ENCODE measurements at regions of chr6 and their contacts with region 1.

Region 1: DNA sequence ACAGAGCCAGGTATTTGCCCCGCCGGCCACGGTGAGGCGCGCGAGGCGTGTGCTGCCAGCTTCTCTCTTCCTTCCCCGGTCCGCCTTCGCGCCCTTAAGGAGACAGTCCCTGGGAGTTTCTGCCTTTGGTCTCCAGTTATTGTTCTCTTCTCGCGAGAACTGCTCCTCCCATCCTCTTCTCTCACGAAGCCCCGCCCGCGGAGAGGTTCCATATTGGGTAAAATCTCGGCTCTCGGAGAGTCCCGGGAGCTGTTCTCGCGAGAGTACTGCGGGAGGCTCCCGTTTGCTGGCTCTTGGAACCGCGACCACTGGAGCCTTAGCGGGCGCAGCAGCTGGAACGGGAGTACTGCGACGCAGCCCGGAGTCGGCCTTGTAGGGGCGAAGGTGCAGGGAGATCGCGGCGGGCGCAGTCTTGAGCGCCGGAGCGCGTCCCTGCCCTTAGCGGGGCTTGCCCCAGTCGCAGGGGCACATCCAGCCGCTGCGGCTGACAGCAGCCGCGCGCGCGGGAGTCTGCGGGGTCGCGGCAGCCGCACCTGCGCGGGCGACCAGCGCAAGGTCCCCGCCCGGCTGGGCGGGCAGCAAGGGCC is at the start of gene MAPK14:
- DNase-seq: peak; percentile 94 to 100 (median 98)
- ATAC-seq: peak; percentile 88
- H3K4me3 ChIP-seq: peak within 1 kb of the TSS; percentile 85 to 99
- H3K4me3 Mint-ChIP-seq: peak within 1 kb of the TSS; percentile 90
- H3K27ac ChIP-seq: peak within 1 kb of the TSS; percentile 72 to 73
- H3K27ac Mint-ChIP-seq: peak within 1 kb of the TSS; percentile 95
- H3K4me1 ChIP-seq: peaks cover 14% of the 10 kb centered on the region
- H3K4me1 Mint-ChIP-seq: peaks cover 42% of the 10 kb centered on the region
- H3K27me3 ChIP-seq: peaks cover 0 to 2% of the 10 kb centered on the region in 2 experiments
- H3K27me3 Mint-ChIP-seq: peaks cover 18% of the 10 kb centered on the region
- CTCF ChIP-seq: peak; percentile 87
- total RNA-seq, gene MAPK14: 34.5 to 34.9 TPM

Region 2: DNA sequence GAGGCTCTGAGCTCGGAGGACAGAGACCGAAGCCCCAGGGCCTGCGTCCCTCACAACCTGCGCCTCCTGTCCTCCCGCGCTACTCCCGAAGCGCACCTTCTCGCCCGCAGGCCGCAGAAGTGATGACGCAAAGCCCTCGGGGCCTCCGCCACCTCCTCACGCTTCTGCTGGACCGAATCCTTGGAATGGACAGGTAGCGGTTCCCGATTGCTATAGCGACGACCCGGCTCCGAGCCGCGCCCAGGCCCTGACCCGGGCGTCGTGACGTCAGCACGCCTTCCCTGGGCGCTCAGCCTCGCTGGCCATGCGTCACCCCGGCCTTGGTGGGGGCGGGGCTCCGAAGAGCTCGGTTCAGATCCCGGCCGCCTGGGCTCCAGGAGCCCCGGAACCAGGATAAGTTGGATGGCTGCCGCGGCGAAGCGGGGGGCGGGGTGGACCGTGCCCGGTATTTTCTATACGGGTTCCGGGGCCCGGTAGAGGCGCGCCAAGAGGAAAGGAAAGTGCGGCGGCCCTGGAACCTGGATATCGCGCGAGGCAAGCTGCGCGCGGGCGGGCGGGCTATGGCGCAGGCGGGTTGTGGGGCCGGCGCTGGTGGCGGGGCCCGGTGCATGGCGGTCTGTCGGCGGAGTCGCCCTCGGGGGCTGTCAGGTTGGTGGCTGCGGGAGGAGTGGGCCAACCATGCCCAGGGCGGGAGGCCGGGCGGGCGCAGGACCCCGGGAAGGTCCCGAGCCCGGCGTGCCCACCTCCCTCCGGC is 768.2 kb before region 1 on chr6 and contains the start of gene ZNF76:
- CTCF ChIA-PET with region 1: no interaction called
- POLR2A ChIA-PET with region 1: no interaction called
- intact Hi-C with region 1: loop called in 1 of 2 experiments (anchors 2 kb)
- DNase-seq: peak; percentile 86 to 97 (median 93)
- ATAC-seq: peak; percentile 73
- H3K4me3 ChIP-seq: peak within 1 kb of the TSS; percentile 75 to 95
- H3K4me3 Mint-ChIP-seq: peak within 1 kb of the TSS; percentile 97
- H3K27ac ChIP-seq: peak within 1 kb of the TSS; percentile 88 to 96
- H3K27ac Mint-ChIP-seq: peak within 1 kb of the TSS; percentile 99
- H3K4me1 ChIP-seq: peaks cover 42% of the 10 kb centered on the region
- H3K4me1 Mint-ChIP-seq: peaks cover 55% of the 10 kb centered on the region
- H3K27me3 ChIP-seq: no peaks in the 10 kb centered on the region
- H3K27me3 Mint-ChIP-seq: no peaks in the 10 kb centered on the region
- CTCF ChIP-seq: no peak
- total RNA-seq, gene ZNF76: 54.6 to 57.8 TPM

Region 3: DNA sequence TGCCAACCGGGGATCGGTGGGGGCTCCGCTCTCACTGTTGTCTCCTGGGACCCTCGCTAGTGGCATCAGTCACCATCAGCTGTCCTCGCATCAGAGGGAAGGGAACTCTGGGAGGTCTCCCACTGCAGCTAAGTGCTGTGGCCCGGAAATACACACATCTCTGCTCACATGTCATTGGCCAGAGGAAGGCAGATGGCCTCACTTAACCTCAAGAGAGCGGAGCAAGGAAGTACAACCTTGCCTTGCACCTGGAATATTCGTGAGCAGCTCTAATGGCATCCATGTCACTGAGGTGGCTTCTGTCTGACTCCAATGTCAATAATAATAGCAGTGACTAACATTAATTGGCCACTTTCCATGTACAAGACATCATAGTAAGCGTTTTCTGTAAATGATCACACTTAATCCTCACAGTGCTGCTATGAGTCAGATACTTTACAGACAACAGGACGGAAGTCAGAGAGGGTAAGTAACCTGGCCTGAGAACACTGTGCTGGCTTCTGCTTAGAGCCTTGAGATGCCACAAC is 216.6 kb before region 1 on chr6:
- CTCF ChIA-PET with region 1: no interaction called
- POLR2A ChIA-PET with region 1: no interaction called
- intact Hi-C with region 1: no loop called
- DNase-seq: no peak
- ATAC-seq: no peak
- H3K4me3 ChIP-seq: no peak overlapping the region
- H3K4me3 Mint-ChIP-seq: no peak overlapping the region
- H3K27ac ChIP-seq: no peak overlapping the region
- H3K27ac Mint-ChIP-seq: no peak overlapping the region
- H3K4me1 ChIP-seq: no peaks in the 10 kb centered on the region
- H3K4me1 Mint-ChIP-seq: no peaks in the 10 kb centered on the region
- H3K27me3 ChIP-seq: peaks cover 0 to 2% of the 10 kb centered on the region in 2 experiments
- H3K27me3 Mint-ChIP-seq: peaks cover 19% of the 10 kb centered on the region
- CTCF ChIP-seq: no peak

Region 4: GRCh38 chr6:36075656-36076055 is 48.1 kb after region 1 on chr6:
- CTCF ChIA-PET with region 1: interaction called, 17 read pairs
- POLR2A ChIA-PET with region 1: interaction called, 6 read pairs
- intact Hi-C with region 1: no loop called
- DNase-seq: peak in 4 of 9 experiments; percentile 25 to 50 (median 36)
- ATAC-seq: peak; percentile 51
- H3K4me3 ChIP-seq: no peak overlapping the region
- H3K4me3 Mint-ChIP-seq: no peak overlapping the region
- H3K27ac ChIP-seq: no peak overlapping the region
- H3K27ac Mint-ChIP-seq: peak overlapping the region; percentile 52
- H3K4me1 ChIP-seq: no peaks in the 10 kb centered on the region
- H3K4me1 Mint-ChIP-seq: peaks cover 16% of the 10 kb centered on the region
- H3K27me3 ChIP-seq: no peaks in the 10 kb centered on the region
- H3K27me3 Mint-ChIP-seq: no peaks in the 10 kb centered on the region
- CTCF ChIP-seq: peak; percentile 45

Region 5: GRCh38 chr6:36123257-36124139 is 95.9 kb after region 1 on chr6:
- CTCF ChIA-PET with region 1: interaction called, 35 read pairs
- POLR2A ChIA-PET with region 1: interaction called, 14 read pairs
- intact Hi-C with region 1: loop called in 1 of 2 experiments (anchors 1 kb)
- DNase-seq: peak; percentile 80 to 96 (median 90)
- ATAC-seq: peak; percentile 74
- H3K4me3 ChIP-seq: no peak overlapping the region
- H3K4me3 Mint-ChIP-seq: peak overlapping the region; percentile 54
- H3K27ac ChIP-seq: peak overlapping the region; percentile 38 to 99
- H3K27ac Mint-ChIP-seq: peak overlapping the region; percentile 100
- H3K4me1 ChIP-seq: peaks cover 87% of the 10 kb centered on the region
- H3K4me1 Mint-ChIP-seq: peaks cover 89% of the 10 kb centered on the region
- H3K27me3 ChIP-seq: no peaks in the 10 kb centered on the region
- H3K27me3 Mint-ChIP-seq: no peaks in the 10 kb centered on the region
- CTCF ChIP-seq: peak; percentile 54

Region 6: GRCh38 chr6:36204068-36204753 is 176.6 kb after region 1 on chr6:
- CTCF ChIA-PET with region 1: interaction called, 3 read pairs
- POLR2A ChIA-PET with region 1: interaction called, 16 read pairs
- intact Hi-C with region 1: no loop called
- DNase-seq: peak; percentile 27 to 90 (median 59)
- ATAC-seq: peak; percentile 97
- H3K4me3 ChIP-seq: peak overlapping the region in 1 of 2 experiments; percentile 9
- H3K4me3 Mint-ChIP-seq: peak overlapping the region; percentile 74
- H3K27ac ChIP-seq: no peak overlapping the region
- H3K27ac Mint-ChIP-seq: peak overlapping the region; percentile 63
- H3K4me1 ChIP-seq: peaks cover 55% of the 10 kb centered on the region
- H3K4me1 Mint-ChIP-seq: peaks cover 72% of the 10 kb centered on the region
- H3K27me3 ChIP-seq: no peaks in the 10 kb centered on the region
- H3K27me3 Mint-ChIP-seq: no peaks in the 10 kb centered on the region
- CTCF ChIP-seq: no peak

Region 7: GRCh38 chr6:36442671-36443470 is 415.3 kb after region 1 on chr6 and contains the starts of genes KCTD20 and PXT1:
- CTCF ChIA-PET with region 1: no interaction called
- POLR2A ChIA-PET with region 1: no interaction called
- intact Hi-C with region 1: loop called in 1 of 2 experiments (anchors 1 kb)
- DNase-seq: peak; percentile 66 to 92 (median 86)
- ATAC-seq: peak; percentile 71
- H3K4me3 ChIP-seq: peak within 1 kb of the TSS; percentile 64 to 97
- H3K4me3 Mint-ChIP-seq: peak within 1 kb of the TSS; percentile 97
- H3K27ac ChIP-seq: peak within 1 kb of the TSS; percentile 72 to 90
- H3K27ac Mint-ChIP-seq: peak within 1 kb of the TSS; percentile 99
- H3K4me1 ChIP-seq: peaks cover 31% of the 10 kb centered on the region
- H3K4me1 Mint-ChIP-seq: peaks cover 49% of the 10 kb centered on the region
- H3K27me3 ChIP-seq: no peaks in the 10 kb centered on the region
- H3K27me3 Mint-ChIP-seq: no peaks in the 10 kb centered on the region
- CTCF ChIP-seq: no peak
- total RNA-seq, gene KCTD20: 42.5 to 49.1 TPM
- total RNA-seq, gene PXT1: 0.56 to 0.95 TPM

Measured in CD8-positive, alpha-beta T cell (primary cell).